Activated CD8-positive, alpha-beta T cell treated with anti-CD3 and anti-CD28 coated beads, Interleukin-2, amount 10 ng/mL, durations not matched to agents 7 days and 5 days (primary cell): ENCODE measurements at regions of chr6 and their contacts with region 1.

Region 1: GRCh38 chr6:85482905-85483700 is 33.2 kb downstream of the NT5E start:
- DNase-seq: peak; percentile 89
- ATAC-seq: peak; percentile 92
- H3K4me3 Mint-ChIP-seq: no peak overlapping the region
- H3K27ac Mint-ChIP-seq: no peak overlapping the region
- H3K4me1 Mint-ChIP-seq: peaks cover 18% of the 10 kb centered on the region
- H3K27me3 Mint-ChIP-seq: no peaks in the 10 kb centered on the region

Region 2: GRCh38 chr6:85323435-85324040 is 159.6 kb before region 1 on chr6:
- CTCF ChIA-PET with region 1: interaction called, 24 read pairs
- POLR2A ChIA-PET with region 1: no interaction called
- DNase-seq: peak; percentile 86
- ATAC-seq: peak; percentile 72
- H3K4me3 Mint-ChIP-seq: no peak overlapping the region
- H3K27ac Mint-ChIP-seq: no peak overlapping the region
- H3K4me1 Mint-ChIP-seq: no peaks in the 10 kb centered on the region
- H3K27me3 Mint-ChIP-seq: peaks cover 10% of the 10 kb centered on the region

Region 3: DNA sequence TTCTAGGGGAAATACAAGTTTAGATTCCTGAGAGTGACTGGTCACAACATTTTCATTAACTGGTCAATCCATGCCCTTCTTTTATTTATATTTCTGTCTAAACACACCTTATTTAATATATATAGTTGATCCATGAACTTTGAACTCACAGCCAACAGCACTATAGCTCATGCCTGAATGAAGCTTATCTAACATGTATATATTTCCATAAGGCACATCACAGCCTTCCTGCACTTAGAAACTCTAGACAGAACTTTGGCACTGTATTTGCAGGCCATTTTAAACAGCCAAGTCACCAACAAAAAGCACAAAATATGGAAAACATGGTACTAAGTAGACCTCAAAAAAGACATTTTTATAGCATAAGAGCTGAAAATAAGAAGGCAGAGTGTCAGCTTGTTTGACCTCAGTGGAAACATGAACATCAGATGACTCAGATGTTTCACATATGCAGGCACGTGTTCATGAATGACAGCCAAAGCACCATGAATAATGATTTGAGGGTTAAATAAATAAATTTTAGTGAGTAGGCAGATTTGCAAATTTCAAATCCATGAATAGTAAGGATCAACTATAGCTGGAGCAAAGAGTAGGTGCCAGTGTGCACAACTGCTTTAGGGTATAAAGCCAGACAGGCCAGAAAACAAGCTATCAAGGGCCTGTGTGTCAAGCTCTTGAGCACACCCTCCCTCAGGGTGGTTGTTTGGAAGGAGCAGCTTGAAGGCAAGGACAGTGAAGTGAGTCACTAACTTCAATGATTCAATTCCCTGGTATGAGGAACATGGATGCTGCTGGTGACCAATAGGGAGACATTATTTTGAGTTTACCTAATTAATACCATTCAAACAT is 122.1 kb before region 1 on chr6:
- CTCF ChIA-PET with region 1: interaction called, 120 read pairs
- POLR2A ChIA-PET with region 1: no interaction called
- DNase-seq: no peak
- ATAC-seq: no peak
- H3K4me3 Mint-ChIP-seq: no peak overlapping the region
- H3K27ac Mint-ChIP-seq: no peak overlapping the region
- H3K4me1 Mint-ChIP-seq: no peaks in the 10 kb centered on the region
- H3K27me3 Mint-ChIP-seq: no peaks in the 10 kb centered on the region

Region 4: GRCh38 chr6:85404502-85405174 is 78.5 kb before region 1 on chr6:
- CTCF ChIA-PET with region 1: interaction called, 22 read pairs
- POLR2A ChIA-PET with region 1: interaction called, 3 read pairs
- DNase-seq: no peak
- ATAC-seq: peak; percentile 31
- H3K4me3 Mint-ChIP-seq: no peak overlapping the region
- H3K27ac Mint-ChIP-seq: peak overlapping the region; percentile 79
- H3K4me1 Mint-ChIP-seq: peaks cover 73% of the 10 kb centered on the region
- H3K27me3 Mint-ChIP-seq: no peaks in the 10 kb centered on the region

Region 5: DNA sequence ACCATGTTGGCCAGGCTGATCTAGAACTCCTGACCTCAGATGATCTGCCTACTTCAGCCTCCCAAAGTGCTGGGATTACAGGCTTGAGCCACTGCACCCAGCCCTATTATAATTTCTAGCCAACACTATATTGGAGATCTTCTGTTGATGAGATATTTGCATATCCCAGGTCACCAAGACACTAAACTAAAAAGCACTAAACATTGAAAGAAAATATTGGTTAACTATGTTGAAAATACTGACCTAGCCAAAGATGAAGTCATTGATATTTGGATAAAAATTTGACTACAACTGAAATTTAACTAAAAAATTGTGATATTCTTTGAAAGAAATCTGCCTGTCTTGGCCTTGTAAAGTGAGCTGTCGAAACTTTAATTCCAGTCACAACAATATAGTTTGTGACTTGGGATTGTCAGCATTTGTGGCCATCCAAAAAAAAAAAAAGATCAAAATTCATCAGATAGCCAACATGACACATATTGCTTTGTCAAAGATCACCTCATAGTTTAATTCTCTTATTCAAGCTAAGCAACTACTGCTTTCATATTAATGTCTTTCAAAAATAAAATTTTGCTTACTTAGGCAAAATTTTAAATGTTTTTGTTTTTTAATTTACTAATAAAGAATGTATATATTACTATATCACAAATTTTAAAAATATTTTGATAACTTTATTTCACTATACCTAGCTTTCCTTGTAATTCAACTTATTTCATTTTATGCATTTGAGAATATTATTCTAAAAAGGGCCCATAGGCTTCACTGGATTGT is 39.6 kb before region 1 on chr6:
- CTCF ChIA-PET with region 1: interaction called, 158 read pairs
- POLR2A ChIA-PET with region 1: no interaction called
- DNase-seq: no peak
- ATAC-seq: no peak
- H3K4me3 Mint-ChIP-seq: no peak overlapping the region
- H3K27ac Mint-ChIP-seq: no peak overlapping the region
- H3K4me1 Mint-ChIP-seq: peaks cover 11% of the 10 kb centered on the region
- H3K27me3 Mint-ChIP-seq: peaks cover 13% of the 10 kb centered on the region

Region 6: GRCh38 chr6:85468261-85468660 is 14.8 kb before region 1 on chr6:
- CTCF ChIA-PET with region 1: interaction called, 95 read pairs
- POLR2A ChIA-PET with region 1: interaction called, 3 read pairs
- DNase-seq: no peak
- ATAC-seq: no peak
- H3K4me3 Mint-ChIP-seq: no peak overlapping the region
- H3K27ac Mint-ChIP-seq: peak overlapping the region; percentile 5
- H3K4me1 Mint-ChIP-seq: peaks cover 40% of the 10 kb centered on the region
- H3K27me3 Mint-ChIP-seq: no peaks in the 10 kb centered on the region

Region 7: DNA sequence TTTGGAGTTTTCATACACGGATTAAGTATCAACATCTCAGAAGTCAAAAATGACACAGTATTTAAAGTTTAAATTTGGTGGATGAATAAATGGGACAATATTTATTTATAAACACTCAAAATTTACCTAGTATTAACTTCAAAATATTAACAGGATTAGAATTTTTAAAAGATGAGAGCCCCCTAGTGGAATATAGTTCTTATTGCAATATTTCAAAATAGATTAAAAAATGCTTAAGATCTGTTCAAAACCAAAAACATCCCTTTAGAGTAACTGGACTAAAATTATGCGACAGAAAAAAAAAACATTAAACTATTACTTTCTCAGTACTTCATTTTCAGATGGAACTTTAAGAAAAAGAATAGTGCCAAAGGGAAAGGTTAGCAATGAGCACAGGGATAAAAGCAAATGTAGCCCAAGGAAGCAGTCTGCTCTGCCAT is 54.0 kb after region 1 on chr6:
- CTCF ChIA-PET with region 1: interaction called, 17 read pairs
- POLR2A ChIA-PET with region 1: no interaction called
- DNase-seq: no peak
- ATAC-seq: no peak
- H3K4me3 Mint-ChIP-seq: no peak overlapping the region
- H3K27ac Mint-ChIP-seq: peak overlapping the region; percentile 24
- H3K4me1 Mint-ChIP-seq: no peaks in the 10 kb centered on the region
- H3K27me3 Mint-ChIP-seq: no peaks in the 10 kb centered on the region